Activated CD4-positive, alpha-beta T cell treated with anti-CD3 and anti-CD28 coated beads, Interleukin-2, amount 10 ng/mL, durations not matched to agents 24 days and 14 days (primary cell): ENCODE measurements at regions of chr3 and their contacts with region 1.

Region 1: DNA sequence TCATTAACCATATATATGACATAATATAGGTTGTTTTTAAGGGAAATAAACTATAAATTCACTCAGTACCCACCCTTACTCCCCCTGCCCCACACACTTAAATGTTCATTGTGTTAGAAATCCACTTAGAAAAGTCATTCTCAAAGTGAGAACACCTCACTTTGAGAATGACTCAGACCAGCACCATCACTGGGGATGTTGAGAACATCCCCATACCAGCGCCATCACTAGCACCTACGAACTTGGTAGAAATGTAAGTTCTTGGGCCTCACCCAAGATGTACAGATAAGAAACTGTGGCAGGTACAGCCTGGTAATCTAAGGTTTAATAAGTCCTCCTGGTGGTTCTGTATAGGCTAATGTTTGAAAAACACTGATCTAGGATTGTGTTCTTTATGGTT is 362.6 kb downstream of the LPP start:
- DNase-seq: no peak
- H3K4me3 Mint-ChIP-seq: no peak overlapping the region
- H3K27ac Mint-ChIP-seq: no peak overlapping the region
- H3K4me1 Mint-ChIP-seq: peaks cover 6% of the 10 kb centered on the region
- H3K27me3 Mint-ChIP-seq: no peaks in the 10 kb centered on the region

Region 2: DNA sequence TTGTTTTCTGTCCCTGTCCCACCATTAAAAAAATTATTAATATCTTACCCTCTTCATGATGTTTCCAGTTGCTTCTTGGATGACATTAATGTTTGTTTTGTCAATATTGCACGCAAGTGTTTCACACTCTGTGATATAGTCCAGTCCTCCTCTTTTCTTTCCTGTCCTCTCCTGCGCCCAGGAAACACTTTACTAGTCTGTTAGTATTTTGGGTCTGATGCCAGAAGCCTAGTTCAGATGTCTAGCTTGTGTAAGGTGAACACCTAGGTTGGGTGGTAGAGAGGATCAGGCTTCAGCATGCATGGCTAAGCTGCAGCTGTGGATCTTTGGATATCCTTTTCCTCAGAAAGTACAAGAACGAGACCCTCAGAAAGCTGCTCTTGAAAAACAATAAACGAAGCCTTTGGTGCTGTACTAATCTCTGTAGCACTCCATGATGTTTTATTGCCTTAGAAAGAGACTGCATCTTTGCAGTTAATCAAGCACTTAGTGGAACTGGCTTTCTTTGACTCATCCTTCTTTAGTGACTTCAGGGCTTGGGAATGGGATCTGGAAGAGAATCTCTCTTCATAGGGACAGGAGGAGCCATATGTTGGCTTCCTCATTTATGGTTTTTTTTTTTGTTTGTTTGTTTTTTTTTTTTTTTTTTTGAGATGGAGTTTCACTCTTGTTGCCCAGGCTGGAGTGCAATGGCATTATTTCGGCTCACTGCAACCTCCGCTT is 109.2 kb before region 1 on chr3:
- intact Hi-C with region 1: no loop called
- DNase-seq: no peak
- H3K4me3 Mint-ChIP-seq: no peak overlapping the region
- H3K27ac Mint-ChIP-seq: no peak overlapping the region
- H3K4me1 Mint-ChIP-seq: peaks cover 19% of the 10 kb centered on the region
- H3K27me3 Mint-ChIP-seq: no peaks in the 10 kb centered on the region

Region 3: DNA sequence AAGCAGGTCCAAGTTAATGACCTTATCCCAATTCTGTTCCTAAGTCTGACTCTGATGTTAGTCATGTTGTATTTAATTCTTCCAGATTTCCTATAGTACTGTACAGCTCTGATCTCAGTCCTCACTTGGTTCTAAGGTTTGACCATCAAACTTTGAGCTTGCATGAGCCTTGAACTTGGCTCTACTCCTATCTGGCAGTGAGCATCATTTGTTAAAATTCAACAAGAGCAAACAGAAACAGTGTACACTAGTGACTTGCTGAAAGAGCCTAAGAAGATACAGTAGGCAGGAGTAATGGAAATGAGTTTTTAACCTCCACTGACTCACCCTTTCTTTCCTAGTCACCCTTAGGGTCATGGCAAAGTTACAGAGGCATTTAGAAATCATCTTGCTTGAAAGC is 204.1 kb after region 1 on chr3:
- intact Hi-C with region 1: loop called (anchors 5 kb)
- DNase-seq: no peak
- H3K4me3 Mint-ChIP-seq: no peak overlapping the region
- H3K27ac Mint-ChIP-seq: no peak overlapping the region
- H3K4me1 Mint-ChIP-seq: peaks cover 13% of the 10 kb centered on the region
- H3K27me3 Mint-ChIP-seq: peaks cover 4% of the 10 kb centered on the region